ENCODE measurements at regions of chr1 and their contacts with region 1.

Region 1: GRCh38 chr1:160607011-160607671 is 27.8 kb upstream of the CD84 start:
- DNase-seq: no peak
- H3K4me3 ChIP-seq: no peak overlapping the region
- H3K27ac ChIP-seq: no peak overlapping the region
- H3K4me1 ChIP-seq: peaks cover 0 to 2% (median 0%) of the 10 kb centered on the region in 4 experiments; a peak in 1 of 7 replicates
- H3K27me3 ChIP-seq: no peaks in the 10 kb centered on the region
- CTCF ChIP-seq: peak in 2 of 3 experiments; percentile 84 to 86; a peak in 3 of 4 replicates
- EP300 ChIP-seq: no peak
- POLR2A ChIP-seq: no peak
- RAD21 ChIP-seq: peak; percentile 94

Region 2: DNA sequence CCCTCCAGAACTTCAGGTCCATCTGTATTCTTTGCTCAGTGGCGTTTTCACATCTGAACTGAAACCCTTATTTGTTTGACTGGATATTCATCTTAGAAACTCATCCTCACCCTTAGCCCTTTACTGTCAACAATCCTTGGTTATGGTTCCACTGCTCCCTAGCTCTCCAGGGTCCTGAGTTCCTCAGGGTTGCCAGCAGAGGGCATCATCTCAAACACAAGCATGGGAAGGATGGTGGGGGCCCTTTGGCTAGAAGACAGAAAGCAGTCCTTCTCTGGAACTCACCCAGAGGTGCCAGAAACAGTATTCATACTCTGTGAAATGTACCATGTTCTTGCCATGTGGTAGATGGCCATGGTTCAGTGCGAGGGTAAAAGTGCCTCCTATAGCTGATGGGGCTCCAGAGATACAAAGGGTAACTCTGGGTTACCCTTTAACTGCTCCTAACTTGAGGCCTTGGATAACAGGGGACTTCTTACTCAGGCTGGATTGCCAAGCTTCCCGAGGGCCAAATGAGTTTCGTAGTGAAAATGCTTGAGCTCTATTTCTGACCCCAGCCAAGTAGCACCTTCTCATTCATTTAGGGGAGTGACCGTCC is 252.7 kb before region 1 on chr1:
- CTCF ChIA-PET with region 1: interaction called, 11 read pairs
- POLR2A ChIA-PET with region 1: no interaction called
- DNase-seq: no peak
- H3K4me3 ChIP-seq: no peak overlapping the region
- H3K27ac ChIP-seq: no peak overlapping the region
- H3K4me1 ChIP-seq: no peaks in the 10 kb centered on the region
- H3K27me3 ChIP-seq: no peaks in the 10 kb centered on the region
- CTCF ChIP-seq: peak; percentile 78 to 83 (median 81)
- EP300 ChIP-seq: no peak
- POLR2A ChIP-seq: no peak
- RAD21 ChIP-seq: peak; percentile 65 to 76

Region 3: GRCh38 chr1:160394673-160395072 is 212.5 kb before region 1 on chr1:
- CTCF ChIA-PET with region 1: no interaction called
- POLR2A ChIA-PET with region 1: no interaction called
- DNase-seq: no peak
- H3K4me3 ChIP-seq: no peak overlapping the region
- H3K27ac ChIP-seq: no peak overlapping the region
- H3K4me1 ChIP-seq: peaks cover 4 to 16% (median 10%) of the 10 kb centered on the region in 4 experiments
- H3K27me3 ChIP-seq: no peaks in the 10 kb centered on the region; a peak in 1 of 7 replicates
- CTCF ChIP-seq: no peak
- EP300 ChIP-seq: no peak
- POLR2A ChIP-seq: no peak
- RAD21 ChIP-seq: no peak

Region 4: DNA sequence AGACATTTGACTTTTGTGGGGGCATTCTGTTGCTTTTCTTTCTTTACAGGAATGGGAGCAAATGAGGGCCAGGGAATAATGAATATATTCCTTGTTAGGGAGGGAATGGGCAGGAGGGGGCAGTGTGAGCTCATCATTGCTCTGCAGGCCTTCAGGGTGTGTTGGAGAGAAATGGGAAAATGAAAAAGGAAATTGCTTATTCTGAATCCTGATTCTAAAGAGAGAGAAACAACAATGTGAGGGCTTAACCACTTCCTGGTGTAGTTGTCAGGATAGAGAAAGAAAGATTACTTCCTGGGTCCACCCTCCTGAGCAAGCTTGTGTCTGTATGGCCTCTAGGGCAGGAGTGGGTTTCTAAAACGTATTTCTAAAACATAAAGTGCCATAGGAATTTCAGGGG is 178.5 kb before region 1 on chr1:
- CTCF ChIA-PET with region 1: interaction called, 67 read pairs
- POLR2A ChIA-PET with region 1: no interaction called
- DNase-seq: no peak
- H3K4me3 ChIP-seq: no peak overlapping the region
- H3K27ac ChIP-seq: no peak overlapping the region
- H3K4me1 ChIP-seq: no peaks in the 10 kb centered on the region
- H3K27me3 ChIP-seq: no peaks in the 10 kb centered on the region
- CTCF ChIP-seq: peak; percentile 47 to 76 (median 57)
- EP300 ChIP-seq: no peak
- POLR2A ChIP-seq: no peak
- RAD21 ChIP-seq: peak; percentile 85 to 88

Region 5: GRCh38 chr1:160544647-160545046 is 62.5 kb before region 1 on chr1:
- CTCF ChIA-PET with region 1: interaction called, 88 read pairs
- POLR2A ChIA-PET with region 1: no interaction called
- DNase-seq: no peak
- H3K4me3 ChIP-seq: no peak overlapping the region
- H3K27ac ChIP-seq: no peak overlapping the region
- H3K4me1 ChIP-seq: no peaks in the 10 kb centered on the region
- H3K27me3 ChIP-seq: no peaks in the 10 kb centered on the region
- CTCF ChIP-seq: peak in 1 of 3 experiments; percentile 43; a peak in 2 of 4 replicates
- EP300 ChIP-seq: no peak
- POLR2A ChIP-seq: no peak
- RAD21 ChIP-seq: peak; percentile 19 to 34; a peak in 3 of 4 replicates

Region 6: GRCh38 chr1:160618763-160619274 is 11.7 kb after region 1 on chr1:
- CTCF ChIA-PET with region 1: interaction called, 58 read pairs
- POLR2A ChIA-PET with region 1: no interaction called
- DNase-seq: no peak
- H3K4me3 ChIP-seq: no peak overlapping the region
- H3K27ac ChIP-seq: no peak overlapping the region
- H3K4me1 ChIP-seq: no peaks in the 10 kb centered on the region; a peak in 1 of 7 replicates
- H3K27me3 ChIP-seq: no peaks in the 10 kb centered on the region
- CTCF ChIP-seq: peak in 2 of 3 experiments; percentile 39 to 69; a peak in 3 of 4 replicates
- EP300 ChIP-seq: no peak
- POLR2A ChIP-seq: no peak
- RAD21 ChIP-seq: peak in 1 of 2 experiments; percentile 40; a peak in 1 of 4 replicates

Region 7: DNA sequence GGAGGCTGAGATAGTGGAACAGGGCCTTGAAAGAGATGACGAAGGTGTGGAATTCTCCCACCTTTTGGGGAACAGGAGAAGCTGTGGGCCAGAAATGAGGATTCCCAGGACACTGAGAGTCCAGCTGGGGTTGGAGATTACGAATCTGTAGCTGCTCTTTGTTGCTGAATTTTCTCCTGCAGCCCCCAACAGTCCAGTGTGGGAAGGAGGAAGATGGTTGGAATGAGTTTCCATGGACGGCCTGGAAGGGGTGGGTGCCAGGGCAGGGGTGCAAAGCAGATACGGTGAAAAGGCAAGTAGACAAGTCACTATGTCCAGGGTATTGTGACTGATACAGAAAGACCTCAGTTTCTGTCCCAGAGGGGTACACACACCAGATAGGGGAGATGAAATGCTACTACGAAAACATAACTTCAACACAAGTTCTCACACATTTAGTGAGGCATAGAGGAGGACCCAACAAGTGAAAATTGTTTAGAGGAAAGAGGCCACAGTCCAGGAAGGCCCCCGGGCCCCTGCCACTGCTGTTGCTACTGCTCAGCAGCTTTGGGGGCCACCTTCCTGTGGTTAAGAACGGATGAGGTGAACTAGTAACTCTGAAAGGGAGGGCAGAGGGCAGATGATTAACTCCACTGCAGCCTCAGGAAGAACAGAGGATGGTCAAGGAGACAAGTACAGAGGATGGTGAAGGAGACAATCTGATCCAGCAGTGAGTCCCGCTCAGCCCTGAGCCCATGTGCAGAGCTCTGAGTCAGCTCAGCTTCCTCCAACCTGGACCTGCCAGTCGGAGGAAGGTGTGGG is 248.2 kb after region 1 on chr1:
- CTCF ChIA-PET with region 1: no interaction called
- POLR2A ChIA-PET with region 1: no interaction called
- DNase-seq: no peak
- H3K4me3 ChIP-seq: no peak overlapping the region
- H3K27ac ChIP-seq: no peak overlapping the region
- H3K4me1 ChIP-seq: no peaks in the 10 kb centered on the region
- H3K27me3 ChIP-seq: no peaks in the 10 kb centered on the region
- CTCF ChIP-seq: no peak
- EP300 ChIP-seq: no peak
- POLR2A ChIP-seq: no peak
- RAD21 ChIP-seq: no peak

Region 8: DNA sequence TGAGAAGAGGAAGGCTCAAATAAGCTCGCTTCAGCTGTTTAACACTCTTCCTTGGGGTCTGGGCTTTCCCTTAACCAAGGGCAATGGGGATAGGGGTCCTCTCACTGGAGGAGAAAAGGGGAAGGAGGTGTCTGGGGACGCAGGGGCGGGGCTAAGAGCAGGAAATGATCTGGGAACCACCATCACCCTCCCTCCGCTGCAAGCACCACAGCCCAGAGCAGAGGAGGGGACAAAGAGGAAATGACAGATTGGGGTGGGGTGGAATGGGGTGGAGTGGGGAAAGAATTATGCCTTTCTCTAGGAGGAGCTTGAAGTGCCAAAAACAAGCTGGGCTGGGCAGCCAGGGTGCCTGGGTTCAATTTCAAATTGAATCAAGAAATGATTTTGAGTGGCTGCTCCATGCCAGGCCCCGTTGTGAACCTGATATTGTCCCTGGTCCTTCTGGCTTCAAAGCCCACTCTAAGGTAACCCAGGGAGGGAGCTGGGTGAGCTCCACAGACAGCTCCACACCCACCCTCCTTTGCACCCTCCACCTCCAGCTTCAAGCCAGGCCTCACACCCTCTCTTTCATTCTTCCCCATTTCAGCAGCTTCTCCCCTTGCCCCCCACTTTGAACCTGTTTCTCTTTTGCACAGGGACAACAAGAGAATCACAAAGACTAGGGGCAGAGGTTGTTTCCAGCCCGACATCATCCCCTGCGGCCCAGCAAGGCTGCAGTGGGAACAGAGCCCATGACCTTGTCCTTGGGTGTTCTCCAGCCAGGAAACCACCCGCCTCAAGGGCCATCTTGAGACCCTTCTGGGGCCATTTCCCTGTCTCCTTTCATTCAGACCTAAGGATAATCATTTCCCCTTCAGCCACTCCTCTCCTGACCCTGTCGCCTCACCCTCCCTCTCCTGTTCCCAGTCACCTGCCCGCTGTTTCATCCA is 461.4 kb after region 1 on chr1:
- CTCF ChIA-PET with region 1: no interaction called
- POLR2A ChIA-PET with region 1: no interaction called
- DNase-seq: no peak
- H3K4me3 ChIP-seq: no peak overlapping the region
- H3K27ac ChIP-seq: no peak overlapping the region
- H3K4me1 ChIP-seq: peaks cover 0 to 8% (median 3%) of the 10 kb centered on the region in 4 experiments; a peak in 3 of 7 replicates
- H3K27me3 ChIP-seq: no peaks in the 10 kb centered on the region
- CTCF ChIP-seq: no peak
- EP300 ChIP-seq: no peak
- POLR2A ChIP-seq: no peak
- RAD21 ChIP-seq: no peak

Measured in H1 (cell line).